G401 (cell line): ENCODE measurements at regions of chr6 and their contacts with region 1.

Region 1: GRCh38 chr6:42113929-42114636 is 28.3 kb downstream of the C6orf132 start:
- DNase-seq: no peak

Region 2: DNA sequence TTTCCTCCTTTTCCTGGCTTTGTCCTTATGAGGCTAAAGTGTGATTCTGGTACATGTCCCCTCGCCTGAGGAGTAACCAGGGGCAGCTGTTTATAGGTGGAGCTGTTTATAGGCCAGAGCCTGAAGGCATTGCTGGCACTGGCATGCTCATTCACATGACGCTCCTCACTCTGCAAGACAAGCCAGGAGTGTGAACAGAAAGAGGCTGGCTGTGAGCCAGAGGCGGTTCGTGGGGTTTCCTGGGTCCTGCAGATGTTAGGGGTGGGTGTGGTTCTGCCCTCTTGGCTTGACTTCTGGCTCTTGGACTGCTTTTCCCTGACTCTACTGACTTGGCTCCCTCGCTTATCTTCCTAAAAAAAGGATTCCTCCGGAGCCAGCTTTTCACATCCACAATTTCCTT is 488.6 kb before region 1 on chr6:
- in situ Hi-C with region 1: no loop called
- DNase-seq: no peak

Region 3: GRCh38 chr6:42075159-42075838 is 38.8 kb before region 1 on chr6:
- in situ Hi-C with region 1: no loop called
- DNase-seq: peak; percentile 65

Region 4: DNA sequence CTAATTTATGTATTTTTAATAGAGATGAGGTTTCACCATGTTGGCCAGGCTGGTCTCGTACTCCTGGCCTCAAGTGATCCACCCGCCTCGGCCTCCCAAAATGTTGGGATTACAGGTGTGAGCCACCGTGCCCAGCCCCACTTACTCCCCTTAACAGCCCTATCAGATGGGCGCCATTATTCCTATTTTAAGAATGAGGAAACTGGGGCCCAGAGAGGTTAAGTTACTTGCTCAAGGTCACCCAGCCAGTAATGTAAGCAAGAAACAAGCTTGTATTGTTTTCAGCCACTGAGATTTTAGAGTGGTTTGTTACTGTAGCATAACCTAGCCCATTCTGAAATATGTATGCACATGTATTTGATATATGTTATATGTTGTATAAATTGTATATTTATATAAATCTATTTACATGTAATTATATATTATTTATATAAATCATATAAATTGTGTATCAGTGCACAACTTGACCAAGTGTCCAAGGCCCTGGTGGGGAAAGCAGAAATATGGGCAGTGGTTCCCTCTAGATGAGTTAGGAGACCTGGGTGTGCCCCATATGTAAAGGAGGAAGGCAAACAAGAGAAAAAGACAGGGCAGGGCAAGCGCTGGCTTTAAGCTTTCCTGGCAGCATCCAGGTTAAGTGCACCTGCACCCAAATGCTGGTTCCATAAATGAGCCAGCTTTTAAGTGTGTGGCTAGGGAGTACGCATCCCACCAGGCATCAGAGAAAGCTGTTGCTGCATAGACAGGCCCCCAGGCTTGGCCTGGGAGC is 57.9 kb after region 1 on chr6:
- in situ Hi-C with region 1: loop called (anchors 5 kb)
- DNase-seq: no peak